ENCODE measurements at regions of chr5 and their contacts with region 1.

Region 1: GRCh38 chr5:148443998-148444397 is 60.2 kb downstream of the FBXO38 start:
- DNase-seq: peak; percentile 59
- H3K4me3 ChIP-seq: no peak overlapping the region
- CTCF ChIP-seq: peak; percentile 61

Region 2: GRCh38 chr5:148393390-148393741 is 50.6 kb before region 1 on chr5:
- in situ Hi-C with region 1: loop called (anchors 5 kb)
- DNase-seq: no peak
- H3K4me3 ChIP-seq: no peak overlapping the region
- CTCF ChIP-seq: no peak

Region 3: GRCh38 chr5:148511810-148512347 is 67.9 kb after region 1 on chr5:
- in situ Hi-C with region 1: no loop called
- DNase-seq: no peak
- H3K4me3 ChIP-seq: no peak overlapping the region
- CTCF ChIP-seq: no peak

Region 4: DNA sequence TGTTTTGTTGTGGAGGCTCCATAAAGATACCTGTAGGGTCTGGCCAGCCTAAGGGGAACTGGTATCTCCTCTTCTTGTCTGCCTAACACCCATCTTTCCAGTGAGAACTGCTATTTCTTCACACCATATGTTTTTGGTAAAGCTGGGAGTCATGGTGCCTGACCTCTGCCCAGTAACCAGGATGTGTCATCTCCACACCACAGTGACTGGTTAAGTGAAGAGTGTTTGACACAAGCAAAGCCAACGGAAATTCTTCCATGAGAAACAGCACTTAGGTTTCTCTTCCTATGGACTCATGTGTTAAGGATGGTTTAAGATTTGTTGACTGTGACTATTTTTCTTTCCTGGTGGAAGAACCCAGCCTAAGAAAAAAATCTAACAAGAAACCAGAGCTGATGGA is 98.8 kb after region 1 on chr5:
- in situ Hi-C with region 1: no loop called
- DNase-seq: no peak
- H3K4me3 ChIP-seq: no peak overlapping the region
- CTCF ChIP-seq: no peak

Region 5: DNA sequence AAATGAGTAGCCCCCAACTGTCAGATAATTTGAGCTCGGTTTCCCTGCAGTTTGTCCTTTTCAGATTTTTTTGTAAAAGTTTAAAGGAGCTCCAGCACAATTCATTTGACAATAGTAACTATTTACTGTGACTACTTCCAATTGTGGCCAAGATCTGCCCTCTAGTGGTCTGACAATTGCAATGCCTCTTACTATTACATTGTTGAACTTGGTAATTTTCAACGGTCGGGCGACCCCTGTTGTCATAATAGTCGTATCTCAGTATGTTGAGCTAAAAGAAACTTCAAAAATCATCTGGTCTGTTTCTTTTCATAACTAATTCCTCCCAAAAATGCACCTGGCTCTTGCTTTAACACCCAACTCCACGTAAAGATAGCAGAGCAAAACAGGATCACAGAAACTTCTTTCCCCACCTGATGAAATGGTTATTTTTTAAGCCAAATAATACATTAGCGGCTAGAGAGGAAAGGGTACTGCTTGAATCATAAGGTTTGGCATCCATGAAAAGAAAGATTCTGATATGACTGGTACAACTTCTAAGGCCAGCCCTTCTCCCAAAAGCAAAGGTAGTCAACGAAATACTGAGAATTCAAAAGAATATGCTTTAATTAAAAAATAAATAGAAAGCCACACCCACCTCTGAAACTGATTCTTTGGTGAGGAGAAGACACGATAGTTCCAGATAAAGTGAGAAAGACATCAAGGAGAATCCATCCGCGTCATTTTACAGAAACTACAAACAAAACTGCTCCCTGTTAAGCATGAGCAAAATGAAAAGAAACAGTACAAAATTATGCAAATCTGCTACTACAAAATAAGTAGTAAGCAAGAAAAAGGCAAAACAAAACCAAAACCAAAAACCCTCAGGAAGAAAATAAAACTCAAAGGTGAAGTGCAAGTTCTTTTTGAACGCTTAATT is 287.2 kb after region 1 on chr5:
- in situ Hi-C with region 1: loop called (anchors 10 kb)
- DNase-seq: peak; percentile 87
- H3K4me3 ChIP-seq: no peak overlapping the region
- CTCF ChIP-seq: peak; percentile 70

Region 6: DNA sequence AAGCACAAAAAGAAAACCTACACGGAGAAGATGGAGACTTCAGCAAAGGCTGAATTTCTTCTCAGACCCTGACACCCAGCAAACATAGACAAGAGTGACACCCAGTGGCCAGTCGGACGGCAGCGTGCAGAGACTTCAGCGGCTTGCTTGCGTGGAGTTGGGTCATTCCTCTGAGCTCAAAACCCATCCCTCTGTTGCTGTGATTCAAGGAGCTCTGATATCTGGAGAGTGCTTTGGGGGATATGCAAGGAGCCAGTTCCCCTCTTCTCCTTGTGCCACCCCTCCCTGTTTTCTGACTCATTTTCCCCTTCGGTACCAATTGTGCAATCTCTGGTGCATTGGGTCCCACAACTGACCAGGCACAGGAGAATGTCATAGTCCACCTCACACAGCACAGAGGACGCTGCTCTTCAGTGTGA is 591.4 kb after region 1 on chr5:
- in situ Hi-C with region 1: loop called (anchors 10 kb)
- DNase-seq: peak; percentile 73
- H3K4me3 ChIP-seq: no peak overlapping the region
- CTCF ChIP-seq: peak; percentile 96

Region 7: DNA sequence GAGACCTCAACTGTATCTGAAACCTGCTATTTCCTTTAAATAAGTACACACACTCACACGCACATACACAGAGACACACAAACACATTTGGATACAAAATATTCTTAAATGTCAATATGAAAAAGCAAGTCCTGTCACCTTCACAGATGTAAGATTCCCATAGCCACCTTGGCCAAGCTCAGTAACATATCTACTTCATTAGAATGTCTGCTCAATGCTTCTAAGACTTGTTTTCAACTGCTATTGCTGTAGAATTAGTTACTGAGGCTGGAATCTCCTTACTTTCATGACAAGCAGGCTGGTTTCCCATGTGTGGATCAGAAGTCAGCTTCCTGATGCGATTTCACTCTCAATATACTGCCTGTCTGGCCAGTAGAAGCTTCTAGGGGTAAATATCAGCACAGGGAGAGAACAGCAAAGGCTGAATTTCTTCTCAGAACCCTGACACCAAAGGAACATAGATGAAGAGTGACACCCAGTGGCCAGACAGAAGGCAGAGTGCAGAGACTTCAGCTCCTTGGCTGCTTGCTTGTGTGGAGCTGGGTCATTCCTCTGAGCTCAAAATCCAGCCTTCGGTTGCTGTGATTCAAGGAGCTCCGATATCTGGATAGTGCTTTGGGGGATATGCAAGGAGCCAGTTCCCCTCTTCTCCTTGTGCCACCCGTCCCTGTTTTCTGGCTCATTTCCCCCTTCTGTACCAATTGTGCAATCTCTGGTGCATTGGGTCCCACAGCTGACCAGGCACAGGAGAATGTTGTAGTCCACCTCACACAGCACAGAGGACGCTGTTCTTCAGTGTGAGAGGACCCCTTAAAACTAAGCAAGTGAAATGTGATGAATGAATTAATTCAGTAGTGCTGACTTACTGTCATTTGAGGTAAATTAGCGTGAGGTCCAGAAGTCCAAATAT is 670.7 kb after region 1 on chr5:
- in situ Hi-C with region 1: loop called (anchors 25 kb)
- DNase-seq: peak; percentile 73
- H3K4me3 ChIP-seq: no peak overlapping the region
- CTCF ChIP-seq: peak; percentile 86